ENCODE measurements at regions of chr2 and their contacts with region 1.

Region 1: GRCh38 chr2:158025255-158025996 is 76.2 kb upstream of the UPP2 start:
- DNase-seq: no peak
- H3K4me3 ChIP-seq: no peak overlapping the region
- H3K27ac ChIP-seq: no peak overlapping the region
- H3K4me1 ChIP-seq: no peaks in the 10 kb centered on the region
- H3K27me3 ChIP-seq: no peaks in the 10 kb centered on the region
- CTCF ChIP-seq: no peak

Region 2: GRCh38 chr2:157876066-157876787 is 149.2 kb before region 1 on chr2 and contains the start of gene ACVR1:
- intact Hi-C with region 1: no loop called
- DNase-seq: peak; percentile 98
- H3K4me3 ChIP-seq: peak within 1 kb of the TSS; percentile 81 to 94
- H3K27ac ChIP-seq: peak within 1 kb of the TSS; percentile 88 to 96
- H3K4me1 ChIP-seq: peaks cover 0 to 35% (median 22%) of the 10 kb centered on the region in 4 donors
- H3K27me3 ChIP-seq: no peaks in the 10 kb centered on the region
- CTCF ChIP-seq: peak in 1 of 2 experiments; percentile 70

Region 3: DNA sequence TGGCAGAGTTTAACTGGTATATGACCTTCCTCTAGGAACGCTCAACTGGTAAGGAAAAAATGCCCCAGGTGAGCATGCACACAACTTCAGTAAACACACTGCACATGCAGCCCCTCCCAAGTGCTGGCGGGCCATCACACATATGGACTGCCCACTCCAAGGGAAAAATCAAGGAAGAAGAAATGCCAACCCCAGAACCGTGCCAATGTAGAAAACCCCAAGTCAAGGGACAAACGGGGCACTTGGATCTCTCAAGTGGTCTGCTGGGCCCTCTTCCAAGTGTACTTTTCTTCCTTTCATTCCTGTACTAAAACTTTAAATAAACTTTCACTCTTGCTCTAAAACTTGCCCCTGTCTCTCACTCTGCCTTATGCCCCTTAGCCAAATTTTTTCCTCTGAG is 72.9 kb before region 1 on chr2:
- intact Hi-C with region 1: no loop called
- DNase-seq: no peak
- H3K4me3 ChIP-seq: no peak overlapping the region
- H3K27ac ChIP-seq: no peak overlapping the region
- H3K4me1 ChIP-seq: no peaks in the 10 kb centered on the region
- H3K27me3 ChIP-seq: no peaks in the 10 kb centered on the region
- CTCF ChIP-seq: no peak

Region 4: GRCh38 chr2:158045362-158045761 is 19.9 kb after region 1 on chr2:
- intact Hi-C with region 1: no loop called
- DNase-seq: no peak
- H3K4me3 ChIP-seq: no peak overlapping the region
- H3K27ac ChIP-seq: no peak overlapping the region
- H3K4me1 ChIP-seq: no peaks in the 10 kb centered on the region
- H3K27me3 ChIP-seq: no peaks in the 10 kb centered on the region
- CTCF ChIP-seq: no peak

Region 5: GRCh38 chr2:158745044-158745865 is 719.8 kb after region 1 on chr2:
- intact Hi-C with region 1: loop called (anchors 5 kb)
- DNase-seq: no peak
- H3K4me3 ChIP-seq: no peak overlapping the region
- H3K27ac ChIP-seq: no peak overlapping the region
- H3K4me1 ChIP-seq: no peaks in the 10 kb centered on the region
- H3K27me3 ChIP-seq: peaks cover 0 to 31% of the 10 kb centered on the region in 2 donors
- CTCF ChIP-seq: peak in 1 of 2 experiments; percentile 24